ENCODE measurements at regions of chr1 and their contacts with region 1.

Region 1: DNA sequence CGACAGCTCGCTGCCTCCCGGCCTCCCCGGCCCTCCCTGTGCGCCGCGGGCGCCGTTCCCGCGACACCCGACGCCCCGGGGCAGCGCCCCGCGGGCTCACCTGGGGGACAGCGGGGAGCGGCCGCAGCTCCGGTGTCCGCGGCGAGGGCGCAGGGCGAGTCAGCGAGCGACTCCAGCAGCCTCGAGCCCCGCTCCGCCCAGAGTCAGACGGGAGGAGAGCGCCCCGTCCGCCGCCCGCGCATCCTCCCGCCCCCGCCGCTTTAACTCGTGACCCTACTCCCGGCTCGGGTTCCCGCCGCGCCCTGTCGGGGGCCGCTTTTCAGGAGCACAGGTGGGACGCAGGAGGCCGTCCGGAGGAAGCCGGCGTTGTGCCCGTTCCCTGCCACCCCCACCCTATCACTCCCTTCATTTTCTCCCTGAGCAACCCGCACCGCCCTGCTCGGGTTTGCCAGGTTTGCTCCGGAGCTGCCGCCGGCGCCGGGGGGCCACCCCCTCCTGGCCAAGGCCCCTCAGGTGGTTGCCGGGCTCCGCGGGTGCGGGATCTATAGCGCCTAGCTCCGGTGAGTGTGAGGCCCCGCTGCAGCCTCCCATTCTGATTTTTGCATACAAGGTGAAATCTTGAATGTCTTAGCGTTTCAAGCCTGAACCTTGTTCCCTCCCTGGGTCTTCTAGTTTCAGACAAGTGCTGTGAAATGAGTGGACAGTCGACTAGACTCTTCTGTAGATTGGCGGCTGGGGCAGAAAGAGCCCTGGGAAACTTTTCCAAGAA is at the start of gene MCOLN3:
- DNase-seq: peak; percentile 53
- H3K4me3 ChIP-seq: peak within 1 kb of the TSS; percentile 72 to 86 (median 86)
- H3K27ac ChIP-seq: peak within 1 kb of the TSS; percentile 33
- H3K4me1 ChIP-seq: peaks cover 5% of the 10 kb centered on the region
- H3K27me3 ChIP-seq: no peaks in the 10 kb centered on the region
- CTCF ChIP-seq: no peak
- total RNA-seq, gene MCOLN3: 17.0 to 21.2 TPM

Region 2: GRCh38 chr1:84959294-84959693 is 89.2 kb before region 1 on chr1:
- CTCF ChIA-PET with region 1: no interaction called
- dilution Hi-C with region 1: no loop called
- in situ Hi-C with region 1: no loop called
- intact Hi-C with region 1: no loop called
- DNase-seq: no peak
- H3K4me3 ChIP-seq: no peak overlapping the region
- H3K27ac ChIP-seq: no peak overlapping the region
- H3K4me1 ChIP-seq: peaks cover 3% of the 10 kb centered on the region
- H3K27me3 ChIP-seq: no peaks in the 10 kb centered on the region
- CTCF ChIP-seq: no peak

Region 3: GRCh38 chr1:85128341-85128740 is 79.9 kb after region 1 on chr1:
- CTCF ChIA-PET with region 1: no interaction called
- dilution Hi-C with region 1: no loop called
- in situ Hi-C with region 1: no loop called
- intact Hi-C with region 1: no loop called
- DNase-seq: no peak
- H3K4me3 ChIP-seq: no peak overlapping the region
- H3K27ac ChIP-seq: no peak overlapping the region
- H3K4me1 ChIP-seq: no peaks in the 10 kb centered on the region
- H3K27me3 ChIP-seq: no peaks in the 10 kb centered on the region
- CTCF ChIP-seq: no peak

Region 4: DNA sequence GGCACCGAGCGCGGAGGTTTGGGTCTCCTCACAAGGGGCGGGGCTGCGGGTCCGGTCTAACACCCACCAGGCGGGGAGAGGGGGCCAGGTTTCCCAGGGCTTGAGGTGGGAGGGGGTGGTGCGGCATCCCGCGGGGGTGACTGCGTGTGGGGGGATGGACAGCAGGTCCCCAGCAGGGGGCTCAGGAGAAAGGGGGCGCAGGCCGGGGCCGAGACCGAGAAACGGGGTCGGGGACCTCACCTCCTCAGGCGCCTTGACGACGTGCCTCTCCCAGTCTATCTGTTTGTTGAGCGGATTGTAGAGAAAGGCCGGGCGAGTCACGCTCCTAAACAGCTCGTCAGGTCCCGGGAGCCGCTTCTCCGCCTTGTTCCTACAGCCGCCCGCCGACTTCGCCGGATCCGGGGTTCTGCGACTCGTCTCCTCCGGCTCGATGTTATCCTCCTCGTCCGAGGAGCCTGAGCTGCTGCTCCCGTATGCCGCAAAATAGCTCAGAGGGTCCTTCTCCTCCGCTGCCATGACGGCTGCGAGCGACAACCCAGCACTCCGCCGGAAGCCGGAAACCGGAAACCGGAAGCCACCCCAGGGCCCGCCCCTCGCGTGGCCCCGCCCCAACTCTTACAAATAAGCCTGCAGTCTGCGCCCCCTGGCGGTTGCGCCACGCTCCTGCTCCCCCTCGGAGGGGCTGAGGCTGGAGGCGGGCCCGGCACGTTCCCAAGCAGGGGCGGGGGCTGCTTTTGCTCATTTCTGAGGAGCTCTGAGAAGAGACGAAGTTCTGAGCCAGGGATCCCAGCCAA is 210.8 kb after region 1 on chr1 and contains the start of gene C1orf52:
- CTCF ChIA-PET with region 1: no interaction called
- dilution Hi-C with region 1: no loop called
- in situ Hi-C with region 1: no loop called
- intact Hi-C with region 1: loop called (anchors 5 kb)
- DNase-seq: peak; percentile 81
- H3K4me3 ChIP-seq: peak within 1 kb of the TSS; percentile 74 to 96 (median 96)
- H3K27ac ChIP-seq: peak within 1 kb of the TSS; percentile 72
- H3K4me1 ChIP-seq: peaks cover 4% of the 10 kb centered on the region
- H3K27me3 ChIP-seq: no peaks in the 10 kb centered on the region
- CTCF ChIP-seq: peak; percentile 71 to 92
- total RNA-seq, gene C1orf52: 13.7 to 25.7 TPM

Region 5: DNA sequence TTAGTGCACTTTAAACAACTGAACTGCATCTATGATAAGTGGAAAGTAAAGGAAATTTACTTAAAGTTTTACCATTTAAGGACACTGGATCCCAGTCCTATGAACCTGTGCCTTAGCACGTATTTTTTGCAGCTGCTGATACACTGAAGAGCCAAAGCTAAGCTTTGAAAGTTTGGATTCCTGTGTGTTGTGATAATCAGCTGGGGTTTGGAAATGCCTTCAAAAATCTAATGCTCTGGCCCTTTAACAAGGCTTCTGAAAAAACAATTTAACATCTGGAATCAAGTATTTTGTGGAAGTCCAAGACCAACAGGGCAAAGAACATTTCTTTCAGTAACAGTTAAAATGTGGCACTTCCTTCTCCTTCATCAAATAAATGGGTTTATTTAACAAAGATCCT is 364.7 kb after region 1 on chr1:
- CTCF ChIA-PET with region 1: no interaction called
- dilution Hi-C with region 1: no loop called
- in situ Hi-C with region 1: no loop called
- intact Hi-C with region 1: no loop called
- DNase-seq: no peak
- H3K4me3 ChIP-seq: no peak overlapping the region
- H3K27ac ChIP-seq: no peak overlapping the region
- H3K4me1 ChIP-seq: no peaks in the 10 kb centered on the region
- H3K27me3 ChIP-seq: no peaks in the 10 kb centered on the region
- CTCF ChIP-seq: no peak